GM12878 (cell line): ENCODE measurements at regions of chr21 and their contacts with region 1.

Region 1: DNA sequence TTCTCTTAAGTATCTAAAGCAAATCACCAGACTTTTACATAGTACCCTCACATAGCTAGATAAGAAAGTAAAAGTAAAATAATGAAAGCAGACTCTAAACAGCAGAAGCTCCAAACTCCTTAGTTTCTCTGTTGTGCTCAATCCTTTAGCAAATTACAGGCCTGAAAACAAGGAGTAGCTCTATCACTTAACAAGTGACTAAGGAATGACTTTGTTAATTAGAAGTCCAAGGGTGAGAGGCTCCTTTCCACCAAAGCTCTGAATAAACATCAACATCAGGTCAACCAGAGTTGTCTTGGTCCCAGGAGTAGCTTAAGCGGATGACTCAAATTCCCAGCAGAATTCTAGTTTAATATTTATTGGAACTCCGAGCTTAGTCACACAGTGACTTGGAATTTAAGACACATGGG is 5.9 kb downstream of the NRIP1 start:
- DNase-seq: no peak
- ATAC-seq: peak; percentile 51
- H3K4me3 ChIP-seq: peak overlapping the region; percentile 52
- H3K27ac ChIP-seq: peak overlapping the region; percentile 80
- H3K4me1 ChIP-seq: peaks cover 4% of the 10 kb centered on the region
- H3K27me3 ChIP-seq: no peaks in the 10 kb centered on the region
- CTCF ChIP-seq: no peak
- EP300 ChIP-seq: no peak
- POLR2A ChIP-seq: no peak
- RAD21 ChIP-seq: no peak

Region 2: GRCh38 chr21:14850394-14850793 is 208.5 kb before region 1 on chr21:
- CTCF ChIA-PET with region 1: no interaction called
- POLR2A ChIA-PET with region 1: no interaction called
- RAD21 ChIA-PET with region 1: no interaction called
- SMC1A ChIA-PET with region 1: no interaction called
- in situ Hi-C with region 1: no loop called
- intact Hi-C with region 1: no loop called
- DNase-seq: no peak
- ATAC-seq: no peak
- H3K4me3 ChIP-seq: no peak overlapping the region
- H3K27ac ChIP-seq: no peak overlapping the region
- H3K4me1 ChIP-seq: no peaks in the 10 kb centered on the region
- H3K27me3 ChIP-seq: no peaks in the 10 kb centered on the region
- CTCF ChIP-seq: no peak
- EP300 ChIP-seq: no peak
- POLR2A ChIP-seq: no peak
- RAD21 ChIP-seq: no peak

Region 3: DNA sequence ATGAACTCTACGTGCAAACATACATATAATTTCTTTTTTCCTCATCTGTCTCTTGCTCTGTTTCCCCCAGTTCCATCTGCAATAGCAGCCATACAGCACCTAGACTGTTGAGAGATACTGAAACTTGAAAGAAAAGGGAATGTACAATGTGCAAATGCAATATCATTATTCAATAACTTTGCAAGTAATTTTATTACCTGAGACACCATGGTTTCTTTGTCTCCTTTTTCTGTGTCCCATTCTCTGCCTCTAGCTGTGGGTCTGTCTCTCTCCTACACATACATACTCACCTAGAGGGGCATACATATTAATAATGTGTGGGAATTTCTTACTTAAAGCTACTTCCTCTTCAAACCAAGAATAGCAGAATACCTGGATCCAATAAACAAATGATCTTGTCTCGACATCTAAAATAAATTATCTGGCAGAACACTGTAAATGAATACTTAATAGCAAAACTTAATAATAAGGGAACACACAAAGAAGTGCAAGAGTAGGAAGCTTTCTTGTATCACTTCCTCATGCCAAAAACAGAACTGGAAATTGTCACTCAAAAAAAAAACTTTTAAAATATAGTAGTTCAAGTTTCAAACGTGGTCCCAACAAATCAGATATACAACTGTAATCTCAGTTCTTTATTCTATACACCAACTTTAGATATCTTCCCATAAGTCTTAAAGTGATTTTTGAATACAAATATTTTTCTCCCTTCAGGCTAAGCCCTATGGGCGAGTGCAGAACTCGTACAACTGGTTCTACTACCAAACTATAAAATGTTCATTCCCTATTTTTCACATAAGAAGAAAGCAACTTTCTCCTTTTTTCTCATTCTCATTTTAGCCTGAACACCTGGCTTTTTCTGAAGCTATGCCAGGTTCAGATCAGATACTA is 188.6 kb before region 1 on chr21:
- CTCF ChIA-PET with region 1: interaction called, 13 read pairs
- POLR2A ChIA-PET with region 1: interaction called, 3 read pairs
- RAD21 ChIA-PET with region 1: interaction called, 7 read pairs
- SMC1A ChIA-PET with region 1: interaction called, 10 read pairs
- in situ Hi-C with region 1: no loop called
- intact Hi-C with region 1: loop called (anchors 2 kb)
- DNase-seq: no peak
- ATAC-seq: peak; percentile 73
- H3K4me3 ChIP-seq: peak overlapping the region; percentile 12; the same call in 1 of the 2 replicates
- H3K27ac ChIP-seq: 0 out of 2 replicates have a peak overlapping the region, but pooled peaks have one; percentile 4
- H3K4me1 ChIP-seq: peaks cover 24% of the 10 kb centered on the region
- H3K27me3 ChIP-seq: no peaks in the 10 kb centered on the region
- CTCF ChIP-seq: no peak
- EP300 ChIP-seq: peak in 1 of 2 experiments; percentile 6; a peak in 1 of 4 replicates
- POLR2A ChIP-seq: no peak
- RAD21 ChIP-seq: no peak